ENCODE measurements at regions of chr6 and their contacts with region 1.

Region 1: DNA sequence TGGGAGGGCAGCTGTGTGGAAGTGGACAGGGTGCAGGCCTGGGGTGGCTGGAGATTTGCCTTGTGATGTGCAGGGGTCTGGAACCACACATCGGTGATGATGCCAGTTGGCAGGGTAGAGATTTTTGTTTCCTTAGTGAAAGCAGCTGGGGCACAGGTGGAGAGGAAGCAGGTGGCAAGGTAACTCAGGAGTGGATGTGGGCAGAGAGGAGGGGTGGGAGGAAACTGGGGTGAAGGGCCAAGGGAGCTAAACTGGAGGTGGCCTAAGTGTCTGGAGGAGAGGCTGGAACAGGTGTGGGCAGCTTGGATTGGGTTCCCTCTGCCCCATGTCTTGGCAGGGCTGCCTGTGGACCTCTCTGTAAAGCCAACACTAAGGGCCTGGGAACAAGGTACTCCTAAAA is 4.7 kb upstream of the SCUBE3 start:
- DNase-seq: no peak
- H3K4me3 ChIP-seq: no peak overlapping the region
- H3K27ac ChIP-seq: no peak overlapping the region
- H3K27me3 ChIP-seq: peaks cover 40% of the 10 kb centered on the region
- CTCF ChIP-seq: no peak

Region 2: GRCh38 chr6:35146453-35146852 is 62.6 kb before region 1 on chr6:
- CTCF ChIA-PET with region 1: interaction called, 41 read pairs
- POLR2A ChIA-PET with region 1: no interaction called
- DNase-seq: no peak
- H3K4me3 ChIP-seq: no peak overlapping the region
- H3K27ac ChIP-seq: no peak overlapping the region
- H3K27me3 ChIP-seq: no peaks in the 10 kb centered on the region
- CTCF ChIP-seq: peak; percentile 68

Region 3: GRCh38 chr6:35703554-35703953 is 494.5 kb after region 1 on chr6:
- CTCF ChIA-PET with region 1: no interaction called
- POLR2A ChIA-PET with region 1: no interaction called
- DNase-seq: no peak
- H3K4me3 ChIP-seq: no peak overlapping the region
- H3K27ac ChIP-seq: no peak overlapping the region
- H3K27me3 ChIP-seq: no peaks in the 10 kb centered on the region
- CTCF ChIP-seq: no peak